ENCODE measurements at regions of chr3 and their contacts with region 1.

Region 1: GRCh38 chr3:119034256-119035013 is at the start of gene IGSF11:
- DNase-seq: peak; percentile 79 to 97 (median 92)

Region 2: GRCh38 chr3:118912188-118912587 is 122.2 kb before region 1 on chr3:
- intact Hi-C with region 1: no loop called
- DNase-seq: no peak

Region 3: DNA sequence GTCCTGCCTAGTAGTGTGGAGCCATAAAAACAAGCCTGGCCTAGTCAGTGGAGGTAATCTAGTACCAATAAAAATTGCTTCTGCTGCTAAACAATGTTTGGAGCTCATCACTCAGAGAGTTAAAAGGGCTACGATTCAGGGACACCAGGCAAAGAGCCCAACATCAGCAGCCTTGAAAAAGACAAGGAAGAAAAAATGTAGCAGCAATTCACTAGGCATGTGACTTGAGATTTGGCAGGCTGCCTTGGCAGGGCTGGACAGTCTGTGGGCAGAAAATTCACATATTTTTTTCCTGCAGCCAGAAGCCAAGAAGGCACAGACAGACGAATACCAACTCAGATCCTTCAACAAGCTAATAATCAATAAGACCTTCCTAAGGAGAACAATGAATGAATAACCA is 47.0 kb before region 1 on chr3:
- intact Hi-C with region 1: loop called (anchors 5 kb)
- DNase-seq: peak; percentile 60 to 98 (median 88)

Region 4: GRCh38 chr3:119098619-119099222 is 64.3 kb after region 1 on chr3:
- intact Hi-C with region 1: loop called (anchors 5 kb)
- DNase-seq: peak in 13 of 42 donors; percentile 9 to 64 (median 34)

Region 5: GRCh38 chr3:119120480-119120879 is 86.0 kb after region 1 on chr3:
- intact Hi-C with region 1: no loop called
- DNase-seq: no peak

Region 6: GRCh38 chr3:119293871-119294695 is 259.6 kb after region 1 on chr3 and contains the start of gene ARHGAP31:
- intact Hi-C with region 1: no loop called
- DNase-seq: peak; percentile 39 to 82 (median 66)